ENCODE measurements at regions of chr15 and their contacts with region 1.

Region 1: GRCh38 chr15:40382580-40383456 is at the start of gene KNSTRN:
- DNase-seq: peak; percentile 79 to 96 (median 90)
- ATAC-seq: peak; percentile 98 to 99
- H3K4me3 Mint-ChIP-seq: peak within 1 kb of the TSS; percentile 92 to 99 (median 96)
- H3K27ac Mint-ChIP-seq: peak within 1 kb of the TSS; percentile 56 to 91 (median 87)
- H3K4me1 Mint-ChIP-seq: peaks cover 12 to 28% (median 16%) of the 10 kb centered on the region in 4 donors
- H3K27me3 Mint-ChIP-seq: no peaks in the 10 kb centered on the region
- polyA plus RNA-seq, gene KNSTRN: 2.1 to 2.8 (median 2.4) TPM

Region 2: DNA sequence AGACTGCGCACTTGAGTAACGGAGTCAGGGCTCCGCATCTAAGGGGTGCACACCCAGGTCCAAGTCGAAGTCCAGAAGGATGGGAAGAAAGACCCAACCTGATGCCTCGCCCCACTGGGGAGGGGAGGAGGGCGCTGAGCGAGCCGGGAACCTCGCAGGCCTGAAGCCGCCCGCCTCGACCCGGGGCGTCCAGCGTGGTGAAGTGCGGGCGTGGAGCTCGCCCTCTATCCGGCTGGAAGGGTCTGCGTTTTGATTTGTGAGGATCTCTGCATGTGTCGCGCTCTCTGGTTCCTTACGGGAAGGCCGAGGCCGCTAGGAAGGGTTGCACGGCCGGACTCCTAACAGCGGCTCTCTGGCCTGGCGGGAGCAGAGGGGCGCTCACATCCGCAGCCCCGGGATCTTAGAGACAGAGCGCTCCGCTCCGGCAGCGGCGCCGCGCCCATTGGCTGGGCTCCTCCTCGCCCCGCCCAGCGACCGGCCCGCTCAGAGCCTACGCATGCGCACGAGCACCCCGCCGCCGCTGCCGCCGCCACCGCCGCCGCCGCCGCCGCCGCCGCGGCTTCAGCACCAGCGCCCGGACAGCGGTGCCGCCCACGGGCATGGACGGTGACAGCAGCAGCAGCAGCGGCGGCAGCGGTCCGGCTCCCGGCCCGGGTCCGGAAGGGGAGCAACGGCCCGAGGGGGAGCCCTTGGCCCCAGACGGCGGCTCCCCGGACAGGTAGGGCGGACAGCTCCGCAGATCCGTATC is 24.9 kb before region 1 on chr15 and contains the start of gene DISP2:
- POLR2A ChIA-PET with region 1: no interaction called
- DNase-seq: peak; percentile 83 to 94 (median 91)
- ATAC-seq: peak; percentile 91 to 95
- H3K4me3 Mint-ChIP-seq: peak within 1 kb of the TSS; percentile 78 to 89 (median 84)
- H3K27ac Mint-ChIP-seq: peak within 1 kb of the TSS in 1 of 10 donors; percentile 65
- H3K4me1 Mint-ChIP-seq: peaks cover 7 to 15% (median 14%) of the 10 kb centered on the region in 4 donors
- H3K27me3 Mint-ChIP-seq: peaks cover 3 to 33% (median 6%) of the 10 kb centered on the region in 5 donors
- polyA plus RNA-seq, gene DISP2: 0.02 to 0.73 (median 0.42) TPM

Region 3: DNA sequence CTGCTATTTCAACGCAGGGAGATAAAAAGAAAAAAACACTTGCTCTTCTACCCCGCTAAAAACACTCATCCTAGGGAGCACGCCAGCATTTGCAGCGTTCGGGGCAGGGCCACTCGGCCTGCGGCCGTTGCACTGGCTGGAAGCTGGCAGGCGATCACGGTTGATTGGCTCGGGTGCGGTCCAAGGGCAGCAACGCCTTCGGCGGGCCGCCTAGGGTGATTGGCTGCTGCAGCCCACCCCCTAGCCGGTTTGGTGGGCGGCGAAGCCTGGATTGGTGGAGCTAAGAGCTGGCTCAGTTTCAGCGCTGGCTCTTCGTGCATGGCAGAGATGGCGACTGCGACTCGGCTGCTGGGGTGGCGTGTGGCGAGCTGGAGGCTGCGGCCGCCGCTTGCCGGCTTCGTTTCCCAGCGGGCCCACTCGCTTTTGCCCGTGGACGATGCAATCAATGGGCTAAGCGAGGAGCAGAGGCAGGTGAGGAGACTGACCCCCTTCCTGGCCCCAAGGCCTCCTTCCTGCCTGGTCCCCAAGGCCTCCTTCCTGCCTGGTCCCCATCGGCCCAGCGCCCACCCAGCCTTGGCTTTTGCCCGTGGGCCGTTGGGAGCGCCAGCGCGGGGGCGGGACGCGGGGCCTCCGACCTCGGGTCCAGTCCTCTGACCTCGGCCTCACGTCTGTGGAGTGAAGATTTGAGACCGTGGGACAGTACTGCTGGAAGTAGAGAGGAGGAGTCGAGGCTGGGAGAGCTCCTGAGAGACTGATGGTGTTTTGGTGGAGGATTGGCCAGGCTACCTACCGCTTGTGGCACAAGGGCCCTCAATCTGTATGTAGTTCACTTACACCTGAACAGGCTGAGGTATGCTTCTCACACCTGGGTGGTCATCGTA is 22.9 kb after region 1 on chr15 and contains the start of gene IVD:
- POLR2A ChIA-PET with region 1: interaction called, 17 read pairs
- DNase-seq: peak; percentile 84 to 95 (median 88)
- ATAC-seq: peak; percentile 99
- H3K4me3 Mint-ChIP-seq: peak within 1 kb of the TSS; percentile 84 to 96 (median 92)
- H3K27ac Mint-ChIP-seq: peak within 1 kb of the TSS; percentile 58 to 97 (median 87)
- H3K4me1 Mint-ChIP-seq: peaks cover 12 to 45% (median 35%) of the 10 kb centered on the region in 4 donors
- H3K27me3 Mint-ChIP-seq: no peaks in the 10 kb centered on the region
- polyA plus RNA-seq, gene IVD: 48.2 to 77.7 (median 49.5) TPM